ENCODE measurements at regions of chr2 and their contacts with region 1.

Region 1: GRCh38 chr2:134118279-134119116 is 135.4 kb upstream of the MGAT5 start:
- DNase-seq: peak; percentile 93
- ATAC-seq: peak; percentile 64
- H3K4me3 Mint-ChIP-seq: peak overlapping the region; percentile 80
- H3K27ac Mint-ChIP-seq: no peak overlapping the region
- H3K4me1 Mint-ChIP-seq: peaks cover 31% of the 10 kb centered on the region
- H3K27me3 Mint-ChIP-seq: peaks cover 2% of the 10 kb centered on the region

Region 2: GRCh38 chr2:133886735-133887660 is 231.5 kb before region 1 on chr2:
- CTCF ChIA-PET with region 1: interaction called, 5 read pairs
- POLR2A ChIA-PET with region 1: no interaction called
- intact Hi-C with region 1: loop called in 1 of 2 experiments (anchors 2 kb)
- DNase-seq: peak; percentile 69
- ATAC-seq: peak; percentile 39
- H3K4me3 Mint-ChIP-seq: no peak overlapping the region
- H3K27ac Mint-ChIP-seq: no peak overlapping the region
- H3K4me1 Mint-ChIP-seq: no peaks in the 10 kb centered on the region
- H3K27me3 Mint-ChIP-seq: peaks cover 12% of the 10 kb centered on the region

Region 3: DNA sequence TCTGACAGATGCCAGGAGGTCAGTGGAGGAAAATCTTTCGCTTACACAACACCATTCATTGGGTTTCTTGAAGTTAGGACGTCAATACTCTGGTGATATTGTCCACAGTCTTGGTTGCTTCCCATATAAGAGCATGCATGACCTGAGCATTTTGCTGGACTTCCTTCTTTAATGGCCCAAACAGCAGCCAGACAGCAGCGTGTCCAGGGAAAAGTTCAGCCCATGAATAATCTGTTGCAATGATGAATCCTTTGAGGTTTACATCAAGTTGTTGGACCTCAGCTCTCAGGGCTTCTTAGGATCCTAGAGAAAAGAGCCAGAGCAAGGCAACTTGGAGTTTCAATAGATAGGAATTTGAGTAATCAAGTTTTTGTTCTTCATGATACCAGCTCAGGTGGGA is 20.2 kb before region 1 on chr2:
- CTCF ChIA-PET with region 1: no interaction called
- POLR2A ChIA-PET with region 1: no interaction called
- intact Hi-C with region 1: no loop called
- DNase-seq: no peak
- ATAC-seq: no peak
- H3K4me3 Mint-ChIP-seq: no peak overlapping the region
- H3K27ac Mint-ChIP-seq: no peak overlapping the region
- H3K4me1 Mint-ChIP-seq: no peaks in the 10 kb centered on the region
- H3K27me3 Mint-ChIP-seq: peaks cover 3% of the 10 kb centered on the region

Region 4: DNA sequence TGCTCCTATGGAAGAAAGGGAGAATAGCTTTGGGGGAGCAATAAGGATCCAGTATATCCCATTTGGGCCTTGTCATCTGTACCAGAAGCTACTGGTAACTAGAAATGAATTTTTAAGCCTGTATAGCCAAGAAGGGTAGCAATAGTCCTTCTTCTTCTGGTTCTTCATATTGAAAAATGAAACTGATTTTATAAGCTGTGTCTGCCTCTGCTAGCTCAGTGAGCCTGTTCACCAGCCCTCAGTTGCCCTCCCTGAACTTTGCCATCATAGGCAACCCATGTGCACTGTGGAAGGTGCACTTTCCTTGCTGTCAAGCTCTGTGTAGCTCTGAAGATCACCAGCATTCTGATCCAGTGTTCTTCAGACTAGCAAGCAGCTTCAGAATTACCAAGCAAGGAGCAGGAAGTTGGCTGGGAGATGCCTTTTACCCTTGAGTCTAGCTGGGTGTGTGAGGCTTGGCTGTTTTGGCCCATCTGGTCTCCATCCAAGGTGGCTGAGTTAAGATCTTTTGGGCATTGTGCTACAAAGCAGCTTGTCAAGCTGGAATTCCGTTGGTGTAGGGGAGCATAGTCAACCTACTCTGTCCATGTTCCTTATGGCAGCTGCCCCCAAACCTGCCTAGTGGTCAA is 79.6 kb after region 1 on chr2:
- CTCF ChIA-PET with region 1: interaction called, 73 read pairs
- POLR2A ChIA-PET with region 1: no interaction called
- intact Hi-C with region 1: no loop called
- DNase-seq: no peak
- ATAC-seq: peak; percentile 68
- H3K4me3 Mint-ChIP-seq: peak overlapping the region; percentile 25
- H3K27ac Mint-ChIP-seq: peak overlapping the region; percentile 90
- H3K4me1 Mint-ChIP-seq: peaks cover 80% of the 10 kb centered on the region
- H3K27me3 Mint-ChIP-seq: no peaks in the 10 kb centered on the region

Region 5: GRCh38 chr2:134232868-134233727 is 114.6 kb after region 1 on chr2:
- CTCF ChIA-PET with region 1: interaction called, 9 read pairs
- POLR2A ChIA-PET with region 1: interaction called, 3 read pairs
- intact Hi-C with region 1: loop called in 1 of 2 experiments (anchors 1 kb)
- DNase-seq: peak; percentile 47
- ATAC-seq: peak; percentile 82
- H3K4me3 Mint-ChIP-seq: peak overlapping the region; percentile 36
- H3K27ac Mint-ChIP-seq: peak overlapping the region; percentile 76
- H3K4me1 Mint-ChIP-seq: peaks cover 81% of the 10 kb centered on the region
- H3K27me3 Mint-ChIP-seq: no peaks in the 10 kb centered on the region

Region 6: GRCh38 chr2:134282629-134283400 is 164.3 kb after region 1 on chr2:
- CTCF ChIA-PET with region 1: interaction called, 10 read pairs
- POLR2A ChIA-PET with region 1: no interaction called
- intact Hi-C with region 1: no loop called
- DNase-seq: peak; percentile 70
- ATAC-seq: peak; percentile 91
- H3K4me3 Mint-ChIP-seq: no peak overlapping the region
- H3K27ac Mint-ChIP-seq: peak overlapping the region; percentile 66
- H3K4me1 Mint-ChIP-seq: peaks cover 51% of the 10 kb centered on the region
- H3K27me3 Mint-ChIP-seq: no peaks in the 10 kb centered on the region

Region 7: DNA sequence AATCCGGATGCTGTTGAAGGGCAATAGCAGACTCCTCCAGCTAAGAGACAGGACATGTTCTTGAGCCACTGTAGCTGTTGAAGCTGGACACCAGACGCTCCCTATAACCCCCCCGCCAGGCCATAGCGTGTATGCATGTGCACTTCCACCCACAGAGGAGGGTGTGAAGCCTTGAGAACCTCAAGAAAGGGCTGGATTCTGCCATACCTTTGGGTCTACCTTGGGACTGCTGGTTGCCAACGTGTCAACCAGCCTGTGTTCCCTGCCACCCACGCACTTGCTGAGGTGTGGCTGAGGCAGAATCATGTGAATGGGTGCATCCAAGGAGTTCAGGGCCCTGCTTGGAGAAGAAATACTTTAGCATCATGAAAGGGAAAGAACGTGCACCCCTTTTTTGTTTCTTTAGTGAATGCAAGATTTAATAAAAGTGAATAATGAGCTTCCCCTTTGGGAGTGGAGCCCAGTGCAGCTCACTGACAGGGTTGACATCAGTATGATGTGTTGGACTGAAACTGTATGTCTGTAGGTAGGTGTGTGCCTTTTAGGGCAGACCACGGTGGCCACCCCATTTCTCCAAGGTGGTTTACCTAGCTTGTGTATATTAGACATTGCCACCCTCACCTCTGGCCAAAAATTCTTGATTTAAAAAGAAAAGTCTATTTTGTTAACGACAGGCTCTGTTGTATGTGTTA is 333.7 kb after region 1 on chr2:
- CTCF ChIA-PET with region 1: interaction called, 18 read pairs
- POLR2A ChIA-PET with region 1: no interaction called
- intact Hi-C with region 1: loop called (anchors 1 kb)
- DNase-seq: no peak
- ATAC-seq: no peak
- H3K4me3 Mint-ChIP-seq: no peak overlapping the region
- H3K27ac Mint-ChIP-seq: no peak overlapping the region
- H3K4me1 Mint-ChIP-seq: no peaks in the 10 kb centered on the region
- H3K27me3 Mint-ChIP-seq: no peaks in the 10 kb centered on the region

Region 8: DNA sequence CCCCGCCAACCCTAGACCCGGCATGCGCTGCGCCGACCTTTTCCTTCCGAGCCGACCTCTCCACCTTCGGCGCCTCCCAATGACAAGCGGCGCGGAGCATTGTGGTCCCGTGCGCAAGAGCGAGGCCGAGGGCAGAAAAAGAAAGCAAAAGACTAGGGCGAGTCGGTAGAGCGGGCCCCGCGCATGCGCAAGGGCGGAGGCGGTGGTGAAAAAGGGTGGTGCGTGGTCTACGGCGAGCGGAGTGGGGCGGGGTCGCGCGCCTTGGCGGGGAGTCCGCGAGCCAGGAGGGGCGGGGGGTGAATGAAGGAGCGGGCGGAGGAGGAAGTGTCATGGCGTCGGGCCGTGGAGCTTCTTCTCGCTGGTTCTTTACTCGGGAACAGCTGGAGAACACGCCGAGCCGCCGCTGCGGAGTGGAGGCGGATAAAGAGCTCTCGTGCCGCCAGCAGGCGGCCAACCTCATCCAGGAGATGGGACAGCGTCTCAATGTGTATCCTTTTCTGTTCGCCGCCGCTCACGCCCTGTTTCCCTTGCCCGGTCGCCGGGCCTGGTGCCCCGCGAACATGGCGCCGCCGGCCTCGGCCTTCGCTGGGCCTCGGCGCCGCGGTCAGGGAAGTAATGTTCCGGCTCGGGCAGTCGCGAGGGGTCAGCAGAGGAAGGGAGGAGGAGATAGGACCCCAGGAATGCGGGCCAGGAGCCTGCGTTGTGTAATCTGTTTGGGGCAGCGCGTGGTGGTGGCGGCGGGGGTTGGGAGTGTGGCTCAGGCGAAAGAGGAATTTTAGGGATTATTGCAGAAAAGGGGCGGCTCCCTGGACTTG is 800.2 kb after region 1 on chr2 and contains the start of gene CCNT2:
- CTCF ChIA-PET with region 1: no interaction called
- POLR2A ChIA-PET with region 1: interaction called, 3 read pairs
- intact Hi-C with region 1: loop called in 1 of 2 experiments (anchors 1 kb)
- DNase-seq: peak; percentile 100
- ATAC-seq: peak; percentile 89
- H3K4me3 Mint-ChIP-seq: peak within 1 kb of the TSS; percentile 92
- H3K27ac Mint-ChIP-seq: peak within 1 kb of the TSS; percentile 98
- H3K4me1 Mint-ChIP-seq: peaks cover 27% of the 10 kb centered on the region
- H3K27me3 Mint-ChIP-seq: no peaks in the 10 kb centered on the region
- total RNA-seq, gene CCNT2: 29.3 to 36.6 TPM

Measured in activated CD4-positive, alpha-beta T cell treated with anti-CD3 and anti-CD28 coated beads for 36 hours (primary cell).